Endothelial cell of umbilical vein (primary cell): ENCODE measurements at regions of chr2 and their contacts with region 1.

Region 1: GRCh38 chr2:30711646-30712085 is 95.6 kb downstream of the CAPN13 start:
- DNase-seq: peak; percentile 88
- H3K4me3 ChIP-seq: no peak overlapping the region
- H3K27ac ChIP-seq: no peak overlapping the region
- H3K4me1 ChIP-seq: no peaks in the 10 kb centered on the region
- H3K27me3 ChIP-seq: no peaks in the 10 kb centered on the region
- CTCF ChIP-seq: peak; percentile 99 to 100
- POLR2A ChIP-seq: no peak

Region 2: GRCh38 chr2:30208452-30208851 is 503.2 kb before region 1 on chr2:
- CTCF ChIA-PET with region 1: interaction called, 274 read pairs
- POLR2A ChIA-PET with region 1: no interaction called
- dilution Hi-C with region 1: no loop called
- intact Hi-C with region 1: loop called (anchors 1 kb)
- DNase-seq: peak; percentile 69
- H3K4me3 ChIP-seq: no peak overlapping the region
- H3K27ac ChIP-seq: no peak overlapping the region
- H3K4me1 ChIP-seq: no peaks in the 10 kb centered on the region
- H3K27me3 ChIP-seq: peaks cover 0 to 2% of the 10 kb centered on the region in 2 experiments
- CTCF ChIP-seq: peak; percentile 80 to 85
- POLR2A ChIP-seq: no peak

Region 3: GRCh38 chr2:30239308-30239985 is 472.2 kb before region 1 on chr2:
- CTCF ChIA-PET with region 1: interaction called, 16 read pairs
- POLR2A ChIA-PET with region 1: no interaction called
- dilution Hi-C with region 1: no loop called
- intact Hi-C with region 1: no loop called
- DNase-seq: peak; percentile 58
- H3K4me3 ChIP-seq: no peak overlapping the region
- H3K27ac ChIP-seq: no peak overlapping the region
- H3K4me1 ChIP-seq: no peaks in the 10 kb centered on the region
- H3K27me3 ChIP-seq: no peaks in the 10 kb centered on the region
- CTCF ChIP-seq: peak; percentile 87 to 88
- POLR2A ChIP-seq: no peak

Region 4: DNA sequence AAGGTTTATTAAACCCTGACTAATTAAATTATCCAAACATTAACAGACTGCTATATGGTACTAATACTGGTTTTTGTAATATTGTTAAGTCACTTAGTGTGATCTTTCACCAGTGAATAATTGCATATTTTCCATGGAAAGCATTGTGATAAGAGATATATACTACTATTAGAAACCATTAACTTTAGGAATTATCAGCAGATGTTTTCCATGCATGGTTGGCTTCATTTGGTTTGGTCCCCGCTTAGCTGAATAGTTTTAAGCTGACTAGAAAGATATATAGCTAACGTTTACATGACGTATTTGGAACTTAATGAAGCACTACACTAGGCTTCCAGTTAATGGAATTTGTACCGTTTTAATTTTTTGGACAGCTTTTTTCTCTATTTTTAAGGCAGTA is 226.7 kb before region 1 on chr2:
- CTCF ChIA-PET with region 1: no interaction called
- POLR2A ChIA-PET with region 1: no interaction called
- dilution Hi-C with region 1: no loop called
- intact Hi-C with region 1: no loop called
- DNase-seq: no peak
- H3K4me3 ChIP-seq: no peak overlapping the region
- H3K27ac ChIP-seq: no peak overlapping the region
- H3K4me1 ChIP-seq: no peaks in the 10 kb centered on the region
- H3K27me3 ChIP-seq: no peaks in the 10 kb centered on the region
- CTCF ChIP-seq: no peak
- POLR2A ChIP-seq: no peak

Region 5: DNA sequence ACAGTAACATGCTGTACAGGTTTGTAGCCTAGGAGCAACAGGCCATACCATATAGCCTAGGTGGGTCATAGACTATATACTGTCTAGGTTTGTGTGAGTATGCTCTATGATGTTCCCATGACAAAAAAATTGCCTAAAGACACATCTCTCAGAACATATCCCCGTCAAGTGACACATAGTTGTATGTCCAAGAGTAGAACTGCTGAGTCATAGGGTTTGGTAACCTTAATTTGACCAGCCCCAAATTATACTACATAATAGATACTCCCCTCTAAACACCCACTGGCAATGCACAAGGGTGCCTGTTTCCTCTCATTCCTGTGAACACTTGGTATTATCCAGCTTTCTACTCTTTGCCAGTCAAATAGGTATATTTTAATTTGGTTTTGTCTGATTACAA is 103.0 kb before region 1 on chr2:
- CTCF ChIA-PET with region 1: no interaction called
- POLR2A ChIA-PET with region 1: no interaction called
- dilution Hi-C with region 1: no loop called
- intact Hi-C with region 1: no loop called
- DNase-seq: no peak
- H3K4me3 ChIP-seq: no peak overlapping the region
- H3K27ac ChIP-seq: no peak overlapping the region
- H3K4me1 ChIP-seq: no peaks in the 10 kb centered on the region
- H3K27me3 ChIP-seq: no peaks in the 10 kb centered on the region
- CTCF ChIP-seq: no peak
- POLR2A ChIP-seq: no peak

Region 6: GRCh38 chr2:30862054-30862651 is 150.5 kb after region 1 on chr2:
- CTCF ChIA-PET with region 1: no interaction called
- POLR2A ChIA-PET with region 1: no interaction called
- dilution Hi-C with region 1: no loop called
- intact Hi-C with region 1: loop called (anchors 2 kb)
- DNase-seq: peak; percentile 20
- H3K4me3 ChIP-seq: no peak overlapping the region
- H3K27ac ChIP-seq: no peak overlapping the region
- H3K4me1 ChIP-seq: no peaks in the 10 kb centered on the region
- H3K27me3 ChIP-seq: no peaks in the 10 kb centered on the region
- CTCF ChIP-seq: peak; percentile 39 to 49
- POLR2A ChIP-seq: no peak

Region 7: GRCh38 chr2:31312898-31313297 is 601.2 kb after region 1 on chr2:
- CTCF ChIA-PET with region 1: no interaction called
- POLR2A ChIA-PET with region 1: no interaction called
- dilution Hi-C with region 1: no loop called
- intact Hi-C with region 1: no loop called
- DNase-seq: no peak
- H3K4me3 ChIP-seq: no peak overlapping the region
- H3K27ac ChIP-seq: no peak overlapping the region
- H3K4me1 ChIP-seq: no peaks in the 10 kb centered on the region
- H3K27me3 ChIP-seq: peaks cover 0 to 1% of the 10 kb centered on the region in 2 experiments
- CTCF ChIP-seq: no peak
- POLR2A ChIP-seq: no peak

Region 8: DNA sequence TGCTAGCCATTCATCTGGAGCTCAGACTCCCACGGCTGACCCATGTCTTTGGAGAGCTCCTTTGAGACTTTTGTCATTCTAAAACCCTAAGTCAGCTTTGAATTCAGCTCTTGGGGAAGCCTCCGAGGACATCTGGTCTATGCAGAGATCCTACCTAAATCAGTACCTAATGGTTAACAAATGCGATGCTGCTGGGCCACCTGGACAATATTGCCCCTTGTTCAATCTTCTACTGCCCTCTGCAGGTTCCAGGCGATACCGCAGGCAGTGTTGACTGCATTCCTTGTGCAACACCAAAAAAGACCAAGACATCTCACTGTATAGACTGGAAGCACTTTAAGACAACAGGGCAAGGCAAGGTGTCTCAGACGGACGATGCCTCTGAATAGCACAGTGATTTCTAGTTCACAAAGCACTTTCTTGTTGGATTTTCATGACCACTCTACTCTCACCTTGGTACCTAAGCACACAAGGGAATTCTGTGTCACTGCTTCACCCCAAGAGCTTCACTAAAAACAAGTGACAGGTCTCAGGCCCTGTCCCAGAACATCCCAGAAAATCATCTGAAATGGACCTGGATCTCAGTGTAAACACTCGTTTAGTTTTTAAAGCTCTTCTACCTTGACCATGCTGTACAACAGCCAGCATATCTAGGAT is 622.0 kb after region 1 on chr2:
- CTCF ChIA-PET with region 1: interaction called, 111 read pairs
- POLR2A ChIA-PET with region 1: no interaction called
- dilution Hi-C with region 1: loop called (anchors 25 kb)
- intact Hi-C with region 1: loop called (anchors 1 kb)
- DNase-seq: peak; percentile 60
- H3K4me3 ChIP-seq: no peak overlapping the region
- H3K27ac ChIP-seq: no peak overlapping the region
- H3K4me1 ChIP-seq: no peaks in the 10 kb centered on the region
- H3K27me3 ChIP-seq: peaks cover 0 to 3% of the 10 kb centered on the region in 2 experiments
- CTCF ChIP-seq: peak; percentile 81 to 93
- POLR2A ChIP-seq: no peak